Activated CD4-positive, alpha-beta T cell treated with anti-CD3 and anti-CD28 coated beads, Interleukin-2, amount 10 ng/mL, durations not matched to agents 24 days and 14 days (primary cell): ENCODE measurements at regions of chr20 and their contacts with region 1.

Region 1: GRCh38 chr20:3156811-3157619 is 2.6 kb downstream of the FASTKD5 start:
- DNase-seq: peak; percentile 77
- H3K4me3 Mint-ChIP-seq: peak overlapping the region; percentile 92
- H3K27ac Mint-ChIP-seq: peak overlapping the region; percentile 81
- H3K4me1 Mint-ChIP-seq: peaks cover 44% of the 10 kb centered on the region
- H3K27me3 Mint-ChIP-seq: no peaks in the 10 kb centered on the region

Region 2: DNA sequence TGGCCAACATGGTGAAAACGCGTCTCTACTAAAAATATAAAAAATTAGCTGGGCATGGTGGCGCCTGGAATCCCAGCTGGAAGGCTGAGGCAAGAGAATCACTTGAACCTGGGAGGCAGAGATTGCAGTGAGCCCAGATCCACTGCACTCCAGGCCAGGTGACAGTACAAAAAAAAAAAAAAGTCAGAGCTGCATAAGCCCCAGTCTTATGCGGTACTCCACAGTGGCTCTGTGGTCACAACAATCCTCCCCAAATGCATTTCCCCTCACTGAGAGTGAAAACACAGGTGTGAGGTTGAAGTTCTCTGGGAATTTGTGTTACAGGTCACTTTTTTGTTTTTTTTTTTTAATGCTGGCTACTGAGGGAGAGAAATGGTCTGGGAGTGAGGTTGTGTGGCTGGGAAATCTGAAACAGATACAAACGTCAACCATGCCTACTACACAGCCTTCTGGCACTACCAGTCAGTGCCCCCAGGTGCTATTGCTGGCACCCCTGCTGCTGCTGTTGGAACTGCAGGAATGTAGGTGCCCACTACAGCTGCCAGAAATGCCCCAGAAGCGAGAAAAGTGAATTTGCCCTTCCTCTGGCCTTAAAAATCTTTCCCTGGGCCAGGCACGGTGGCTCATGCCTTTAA is 105.5 kb before region 1 on chr20:
- intact Hi-C with region 1: loop called (anchors 5 kb)
- DNase-seq: no peak
- H3K4me3 Mint-ChIP-seq: no peak overlapping the region
- H3K27ac Mint-ChIP-seq: no peak overlapping the region
- H3K4me1 Mint-ChIP-seq: peaks cover 9% of the 10 kb centered on the region
- H3K27me3 Mint-ChIP-seq: no peaks in the 10 kb centered on the region

Region 3: GRCh38 chr20:3123542-3123941 is 33.5 kb before region 1 on chr20:
- intact Hi-C with region 1: loop called (anchors 2 kb)
- DNase-seq: no peak
- H3K4me3 Mint-ChIP-seq: no peak overlapping the region
- H3K27ac Mint-ChIP-seq: peak overlapping the region; percentile 84
- H3K4me1 Mint-ChIP-seq: peaks cover 32% of the 10 kb centered on the region
- H3K27me3 Mint-ChIP-seq: no peaks in the 10 kb centered on the region

Region 4: GRCh38 chr20:3173610-3174441 is 16.8 kb after region 1 on chr20:
- intact Hi-C with region 1: loop called (anchors 1 kb)
- DNase-seq: peak; percentile 97
- H3K4me3 Mint-ChIP-seq: peak overlapping the region; percentile 87
- H3K27ac Mint-ChIP-seq: peak overlapping the region; percentile 62
- H3K4me1 Mint-ChIP-seq: peaks cover 6% of the 10 kb centered on the region
- H3K27me3 Mint-ChIP-seq: peaks cover 55% of the 10 kb centered on the region

Region 5: GRCh38 chr20:3204124-3204822 is 47.3 kb after region 1 on chr20 and contains the start of gene DDRGK1:
- intact Hi-C with region 1: loop called (anchors 5 kb)
- DNase-seq: peak; percentile 98
- H3K4me3 Mint-ChIP-seq: peak within 1 kb of the TSS; percentile 97
- H3K27ac Mint-ChIP-seq: peak within 1 kb of the TSS; percentile 97
- H3K4me1 Mint-ChIP-seq: peaks cover 15% of the 10 kb centered on the region
- H3K27me3 Mint-ChIP-seq: no peaks in the 10 kb centered on the region
- total RNA-seq, gene DDRGK1: 59.0 and 70.0 TPM in 2 replicates

Region 6: DNA sequence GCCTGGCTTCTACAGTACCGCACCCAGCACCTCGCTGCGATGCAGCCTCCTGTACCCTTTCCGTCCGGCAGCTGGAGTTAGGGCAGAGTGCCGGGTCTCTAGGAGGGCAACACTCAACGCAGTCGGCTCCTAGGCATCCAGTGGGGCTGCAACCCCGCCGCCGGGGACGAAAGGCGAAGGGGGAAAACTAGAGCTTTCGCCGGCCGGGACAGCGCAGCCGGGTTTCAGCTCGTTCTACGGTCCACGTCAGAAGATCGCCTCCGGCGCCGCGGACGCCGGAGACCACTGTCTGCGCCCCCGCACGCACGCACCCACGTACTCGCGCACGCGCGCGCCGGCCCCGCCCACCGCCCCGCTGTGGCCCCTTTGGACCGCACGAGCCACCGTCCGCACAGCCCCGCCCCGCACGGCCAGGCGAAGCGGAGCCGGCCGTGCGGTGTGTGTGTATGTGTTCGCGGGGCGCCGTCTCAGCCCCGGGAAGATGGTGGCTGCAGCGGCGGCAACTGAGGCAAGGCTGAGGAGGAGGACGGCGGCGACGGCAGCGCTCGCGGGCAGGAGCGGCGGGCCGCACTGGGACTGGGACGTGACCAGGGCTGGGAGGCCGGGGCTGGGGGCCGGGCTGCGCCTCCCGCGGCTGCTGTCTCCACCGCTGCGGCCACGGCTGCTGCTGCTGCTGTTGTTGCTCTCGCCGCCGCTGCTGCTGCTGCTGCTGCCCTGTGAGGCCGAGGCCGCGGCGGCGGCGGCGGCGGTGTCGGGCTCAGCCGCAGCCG is 313.8 kb after region 1 on chr20 and contains the start of gene ATRN:
- intact Hi-C with region 1: loop called (anchors 5 kb)
- DNase-seq: peak; percentile 97
- H3K4me3 Mint-ChIP-seq: peak within 1 kb of the TSS; percentile 95
- H3K27ac Mint-ChIP-seq: peak within 1 kb of the TSS; percentile 79
- H3K4me1 Mint-ChIP-seq: peaks cover 26% of the 10 kb centered on the region
- H3K27me3 Mint-ChIP-seq: peaks cover 15% of the 10 kb centered on the region
- total RNA-seq, gene ATRN: 11.8 and 12.1 TPM in 2 replicates